BJ (cell line): ENCODE measurements at regions of chr6 and their contacts with region 1.

Region 1: DNA sequence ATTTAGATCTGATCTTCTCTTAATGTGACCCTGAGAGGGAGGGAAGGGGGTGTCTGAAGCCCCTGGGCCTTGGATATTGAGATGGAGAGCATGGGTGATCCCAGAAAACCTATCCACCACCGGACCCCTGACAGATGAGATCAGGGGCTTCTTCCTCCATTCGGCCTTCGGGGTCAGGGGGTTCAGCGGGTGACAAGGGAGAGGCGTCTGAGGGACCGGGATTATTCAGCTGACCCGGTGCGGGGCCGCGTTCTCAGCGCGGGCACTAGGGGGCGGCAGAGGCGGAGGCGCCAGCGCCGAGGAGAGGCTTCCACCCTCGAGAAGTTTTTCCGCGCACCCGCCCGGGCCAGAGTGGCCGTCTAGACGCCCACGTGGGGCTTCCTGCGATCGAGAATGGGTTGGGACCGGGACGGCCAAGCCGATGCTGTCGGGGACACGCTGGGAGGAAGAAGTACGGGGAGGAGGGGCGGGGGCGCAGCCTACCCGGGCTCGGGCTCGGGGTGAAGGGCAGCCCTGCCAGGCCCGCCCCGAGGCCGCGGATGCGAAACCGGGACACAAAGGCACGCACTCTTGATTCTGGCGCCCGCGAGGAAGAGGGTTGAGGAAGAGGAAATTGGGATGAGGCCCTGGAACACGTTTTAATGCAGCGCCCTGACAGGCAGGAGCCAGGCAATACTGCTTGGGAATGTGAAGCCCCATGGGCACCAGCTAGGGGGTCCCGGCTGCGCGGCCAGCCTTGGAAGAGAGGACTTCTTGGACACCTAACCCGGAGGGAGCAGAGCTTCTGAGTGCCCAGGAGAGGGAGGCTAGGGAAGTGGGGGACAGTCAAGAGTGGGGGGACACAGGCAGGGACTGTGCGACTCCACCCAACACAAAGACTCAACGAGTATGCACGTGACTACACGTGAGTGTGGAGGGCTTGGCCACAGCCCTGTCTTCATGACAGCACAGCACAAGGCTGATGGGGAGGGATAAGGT is 30.6 kb downstream of the COL11A2 start:
- DNase-seq: no peak
- H3K4me3 ChIP-seq: peak overlapping the region; percentile 39
- H3K27me3 ChIP-seq: peaks cover 3% of the 10 kb centered on the region
- CTCF ChIP-seq: peak; percentile 98

Region 2: DNA sequence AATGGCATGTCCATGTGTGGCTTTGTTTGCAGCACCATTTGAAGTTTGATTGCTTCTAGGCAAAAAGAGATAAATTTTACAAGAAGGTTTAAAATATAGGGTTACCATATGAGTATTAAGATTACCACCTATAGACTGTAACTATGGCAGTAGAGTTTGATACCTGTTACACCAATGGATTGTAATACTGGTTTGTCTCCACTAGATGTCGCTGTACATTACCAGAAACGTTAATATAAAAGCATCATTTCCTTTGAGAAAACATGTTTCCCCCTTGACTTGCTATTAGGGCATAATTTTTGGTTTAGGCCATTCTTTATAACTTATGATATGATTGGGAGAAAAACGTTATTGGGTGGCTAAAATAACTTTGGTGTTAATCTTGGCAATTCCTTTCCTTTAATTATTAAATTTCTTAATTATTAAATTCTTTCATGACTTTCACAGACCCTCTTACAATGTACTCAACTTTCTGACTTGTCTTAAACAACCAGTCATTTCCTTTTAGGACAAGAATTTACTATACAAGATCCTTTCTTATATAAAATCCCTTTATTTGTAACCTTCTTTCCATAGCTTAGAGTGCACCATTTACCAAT is 43.0 kb before region 1 on chr6:
- CTCF ChIA-PET with region 1: interaction called, 14 read pairs
- POLR2A ChIA-PET with region 1: no interaction called
- DNase-seq: no peak
- H3K4me3 ChIP-seq: no peak overlapping the region
- H3K27me3 ChIP-seq: peaks cover 32% of the 10 kb centered on the region
- CTCF ChIP-seq: peak; percentile 65

Region 3: DNA sequence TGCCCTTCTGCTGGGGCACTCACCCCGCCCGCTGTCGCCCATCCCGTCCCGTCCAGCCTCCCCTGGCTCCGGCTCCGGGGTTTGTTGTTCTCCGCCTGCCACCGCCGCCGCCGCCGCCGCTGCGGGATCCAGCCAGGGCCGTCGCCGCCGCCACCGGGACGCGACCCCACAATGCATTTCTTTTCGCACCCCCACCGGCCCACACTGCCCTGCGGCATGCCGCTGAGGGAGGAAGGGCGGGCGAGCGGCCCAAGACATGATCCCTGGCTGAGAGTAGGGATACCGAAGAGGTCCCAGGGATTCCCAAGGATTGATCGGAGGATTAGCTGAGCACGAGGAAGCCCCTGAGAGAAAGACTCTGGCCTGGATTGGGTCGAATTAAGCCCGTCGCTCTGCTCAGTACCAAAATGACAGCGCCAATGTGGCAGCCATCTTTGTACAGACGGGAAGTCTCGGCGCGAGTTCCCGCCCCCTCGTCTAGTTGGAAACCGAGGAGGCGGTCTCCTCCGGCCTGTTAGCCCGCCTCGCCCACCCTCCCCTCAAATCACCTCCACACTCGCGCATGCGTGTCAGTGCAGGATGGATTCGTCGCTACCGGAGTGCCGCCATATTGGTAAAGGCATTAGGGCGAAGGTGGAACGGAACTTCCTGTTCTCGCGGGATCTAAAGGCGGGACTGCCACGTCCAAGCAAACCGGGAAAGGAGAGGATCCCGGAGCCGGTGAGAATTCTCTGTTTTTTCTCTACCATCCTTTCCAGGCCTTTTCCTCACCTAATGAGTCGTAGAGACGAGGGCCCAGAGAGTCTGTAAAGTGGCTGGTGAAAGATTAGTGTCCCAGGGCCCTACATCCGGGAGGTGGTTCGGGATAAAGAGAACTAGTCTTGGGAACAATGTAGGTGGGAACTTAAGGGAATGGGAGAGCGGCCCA is 38.8 kb after region 1 on chr6 and contains the starts of genes RXRB and SLC39A7:
- CTCF ChIA-PET with region 1: interaction called, 18 read pairs
- POLR2A ChIA-PET with region 1: no interaction called
- DNase-seq: peak; percentile 96
- H3K4me3 ChIP-seq: peak within 1 kb of the TSS; percentile 78
- H3K27me3 ChIP-seq: no peaks in the 10 kb centered on the region
- CTCF ChIP-seq: no peak
- polyA plus RNA-seq, gene RXRB: 51.3 and 67.9 TPM in 2 replicates
- polyA plus RNA-seq, gene SLC39A7: 116 and 151 TPM in 2 replicates